ENCODE measurements at regions of chr12 and their contacts with region 1.

Region 1: DNA sequence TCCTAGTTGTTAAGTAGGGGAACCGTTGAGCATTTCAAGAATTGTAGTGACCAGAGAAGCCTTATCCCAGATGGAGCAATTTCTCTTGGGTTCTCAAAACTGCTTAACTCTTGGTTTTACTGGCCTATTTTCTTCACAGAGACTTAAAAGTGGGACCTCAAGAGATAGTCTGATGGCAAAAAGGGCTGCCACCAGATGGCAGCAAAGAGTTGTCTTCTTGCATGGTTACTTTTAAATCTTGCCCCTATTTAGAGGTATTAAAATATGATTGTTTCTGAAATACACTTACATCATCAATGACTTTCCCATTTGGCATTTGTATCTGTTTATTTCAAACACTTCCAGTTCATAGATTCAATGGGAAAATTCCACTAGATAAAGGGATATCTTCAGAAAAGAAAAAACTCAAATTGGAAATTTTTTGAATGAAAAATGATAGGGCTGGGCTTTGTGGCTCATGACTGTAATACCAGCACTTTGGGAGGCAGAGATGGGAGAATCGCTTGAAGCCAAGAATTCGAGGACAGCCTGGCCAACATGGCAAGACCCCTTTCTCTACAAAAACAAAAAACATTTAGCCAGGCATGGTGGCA is 69.9 kb upstream of the CNTN1 start:
- DNase-seq: peak in 2 of 3 donors; percentile 32 to 51
- ATAC-seq: peak; percentile 47 to 60 (median 56)
- H3K4me3 ChIP-seq: no peak overlapping the region
- H3K27ac ChIP-seq: no peak overlapping the region
- H3K4me1 ChIP-seq: no peaks in the 10 kb centered on the region
- H3K27me3 ChIP-seq: no peaks in the 10 kb centered on the region
- CTCF ChIP-seq: peak; percentile 55 to 87 (median 76)
- POLR2A ChIP-seq: no peak

Region 2: DNA sequence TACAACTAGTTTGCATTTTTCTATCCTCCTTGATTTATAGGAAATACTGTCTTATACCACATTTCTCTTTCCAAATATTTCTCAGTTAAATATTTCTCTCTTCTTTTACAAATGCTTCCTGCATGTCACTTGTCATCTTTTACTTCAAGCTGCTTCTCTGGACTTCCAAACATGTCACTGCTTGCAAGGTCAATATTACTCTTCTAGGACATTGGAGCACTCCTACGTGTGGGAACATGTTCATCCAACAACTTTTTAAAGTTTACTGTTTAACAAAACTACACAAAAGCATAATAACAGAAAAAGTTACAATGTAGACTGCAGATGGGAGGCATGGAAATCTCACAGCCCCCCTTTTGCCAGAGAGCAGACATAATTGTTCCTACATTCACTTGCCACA is 41.4 kb after region 1 on chr12:
- intact Hi-C with region 1: no loop called
- DNase-seq: no peak
- ATAC-seq: no peak
- H3K4me3 ChIP-seq: no peak overlapping the region
- H3K27ac ChIP-seq: no peak overlapping the region
- H3K4me1 ChIP-seq: peaks cover 0 to 9% (median 0%) of the 10 kb centered on the region in 4 donors
- H3K27me3 ChIP-seq: no peaks in the 10 kb centered on the region
- CTCF ChIP-seq: no peak
- POLR2A ChIP-seq: no peak

Region 3: DNA sequence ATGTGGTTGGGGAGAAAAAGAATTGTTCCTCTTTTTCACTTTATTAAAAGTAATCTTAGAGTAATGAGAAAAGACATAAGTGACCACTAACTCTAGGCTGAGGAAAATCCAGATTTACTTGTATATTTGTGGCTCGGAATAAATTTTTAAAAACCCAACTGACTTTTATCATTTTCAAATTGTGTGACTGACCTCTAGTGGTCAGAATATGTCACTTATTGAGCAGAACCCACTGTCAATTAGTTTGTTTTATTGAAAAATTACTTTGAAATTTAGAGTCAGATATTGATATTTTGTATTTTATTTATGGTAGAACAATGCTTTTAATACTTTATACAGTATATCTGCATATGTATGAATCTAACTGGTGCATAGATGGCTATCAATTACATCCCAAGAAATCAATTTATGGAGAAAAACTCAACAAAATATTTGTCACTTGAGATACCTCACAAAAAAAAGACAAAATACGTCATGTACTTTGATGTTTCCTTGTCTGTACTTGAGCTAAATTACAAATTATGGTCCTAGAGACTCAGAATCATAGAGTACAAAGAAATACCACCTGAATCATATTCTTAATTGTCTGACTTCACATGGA is 299.3 kb after region 1 on chr12:
- intact Hi-C with region 1: loop called (anchors 5 kb)
- DNase-seq: no peak
- ATAC-seq: no peak
- H3K4me3 ChIP-seq: no peak overlapping the region
- H3K27ac ChIP-seq: no peak overlapping the region
- H3K4me1 ChIP-seq: no peaks in the 10 kb centered on the region
- H3K27me3 ChIP-seq: no peaks in the 10 kb centered on the region
- CTCF ChIP-seq: peak; percentile 58 to 75 (median 73)
- POLR2A ChIP-seq: no peak